ENCODE measurements at regions of chr19 and their contacts with region 1.

Region 1: GRCh38 chr19:46487802-46488445 is 7.7 kb downstream of the PNMA8B start:
- DNase-seq: peak; percentile 70 to 83
- H3K4me3 ChIP-seq: peak overlapping the region; percentile 9 to 63 (median 48)
- H3K27ac ChIP-seq: peak overlapping the region; percentile 17 to 22
- H3K4me1 ChIP-seq: peaks cover 4 to 7% of the 10 kb centered on the region in 2 donors
- H3K27me3 ChIP-seq: peaks cover 0 to 3% of the 10 kb centered on the region in 2 donors
- CTCF ChIP-seq: peak; percentile 96 to 99 (median 98)
- POLR2A ChIP-seq: no peak

Region 2: GRCh38 chr19:46271481-46272197 is 216.3 kb before region 1 on chr19:
- intact Hi-C with region 1: no loop called
- DNase-seq: no peak
- H3K4me3 ChIP-seq: no peak overlapping the region
- H3K27ac ChIP-seq: no peak overlapping the region
- H3K4me1 ChIP-seq: no peaks in the 10 kb centered on the region
- H3K27me3 ChIP-seq: peaks cover 0 to 2% of the 10 kb centered on the region in 2 donors
- CTCF ChIP-seq: no peak
- POLR2A ChIP-seq: no peak

Region 3: DNA sequence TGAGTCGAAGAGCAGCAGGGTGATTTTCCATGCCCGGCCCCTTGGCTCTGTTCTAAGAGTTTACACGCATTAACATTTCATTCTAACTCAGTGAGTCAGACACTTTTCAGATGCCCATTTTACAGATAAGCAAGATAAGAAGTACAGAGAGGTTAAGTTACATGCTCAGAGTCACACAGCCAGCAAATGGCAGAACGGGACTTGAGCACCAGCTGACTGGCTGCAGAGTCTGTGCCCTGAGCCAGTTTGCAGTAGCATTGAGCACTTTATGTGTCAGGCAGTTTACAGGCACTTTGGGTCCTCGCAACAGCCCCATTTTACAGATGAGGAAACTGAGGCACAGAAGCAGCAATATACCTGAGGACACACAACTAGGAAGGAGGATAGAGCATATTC is 93.5 kb before region 1 on chr19:
- intact Hi-C with region 1: loop called (anchors 2 kb)
- DNase-seq: no peak
- H3K4me3 ChIP-seq: no peak overlapping the region
- H3K27ac ChIP-seq: peak overlapping the region in 1 of 2 donors; percentile 32
- H3K4me1 ChIP-seq: peaks cover 0 to 9% of the 10 kb centered on the region in 2 donors
- H3K27me3 ChIP-seq: no peaks in the 10 kb centered on the region
- CTCF ChIP-seq: no peak
- POLR2A ChIP-seq: no peak

Region 4: DNA sequence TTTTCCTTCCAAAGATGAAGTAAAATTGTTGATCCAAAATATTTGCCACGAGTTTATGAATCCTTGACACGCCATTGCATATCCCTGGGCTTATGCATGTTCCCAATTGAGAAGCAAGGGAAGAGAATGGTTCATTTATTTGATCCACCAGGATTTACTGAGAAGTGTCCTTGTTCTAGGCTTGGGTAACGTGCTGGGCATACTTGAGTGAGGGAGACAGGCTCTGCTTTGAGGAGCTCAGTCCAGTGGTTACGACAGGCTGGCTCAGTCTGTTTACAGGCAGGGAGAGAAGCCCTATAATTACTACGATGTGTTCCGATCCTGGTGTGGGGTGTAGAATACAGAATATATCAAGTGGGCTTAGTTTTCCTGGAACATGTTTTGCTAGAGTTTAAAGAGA is 52.9 kb before region 1 on chr19:
- intact Hi-C with region 1: no loop called
- DNase-seq: no peak
- H3K4me3 ChIP-seq: no peak overlapping the region
- H3K27ac ChIP-seq: no peak overlapping the region
- H3K4me1 ChIP-seq: no peaks in the 10 kb centered on the region
- H3K27me3 ChIP-seq: no peaks in the 10 kb centered on the region
- CTCF ChIP-seq: no peak
- POLR2A ChIP-seq: no peak

Region 5: DNA sequence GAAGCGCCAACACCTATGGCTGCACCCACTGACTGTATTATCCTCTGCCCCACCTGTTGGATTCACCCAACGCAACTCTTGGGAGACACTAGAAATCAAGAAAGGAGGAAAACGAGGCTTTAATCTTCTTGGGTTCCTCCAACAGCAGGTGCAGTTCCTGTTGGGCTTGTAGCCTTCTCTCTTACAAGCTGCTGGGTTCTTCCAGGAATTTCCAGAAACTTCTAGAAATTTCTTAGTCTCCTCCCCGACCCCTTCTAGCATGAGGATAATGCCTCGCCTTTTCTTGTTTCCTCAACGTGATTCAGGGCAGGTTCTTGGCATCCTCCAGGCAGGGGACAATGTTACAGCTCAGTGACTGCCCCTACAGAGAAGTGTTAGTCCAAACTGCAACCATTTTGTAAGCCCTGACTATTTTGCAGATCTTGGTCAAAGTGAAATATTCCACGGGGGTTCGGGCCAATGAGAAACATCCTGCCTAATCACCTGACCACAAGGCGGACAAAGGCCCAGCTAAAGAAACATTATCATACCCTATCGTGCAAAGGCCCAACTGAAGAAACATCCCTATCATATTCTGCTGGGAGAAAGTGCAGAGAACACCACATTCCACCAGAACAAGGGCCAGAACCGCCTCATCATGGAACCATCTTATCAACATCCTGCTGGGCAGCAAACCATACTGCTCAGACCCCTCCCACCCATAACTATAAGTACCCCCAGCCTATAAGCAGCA is 15.9 kb before region 1 on chr19:
- intact Hi-C with region 1: no loop called
- DNase-seq: no peak
- H3K4me3 ChIP-seq: peak overlapping the region; percentile 31 to 70 (median 52)
- H3K27ac ChIP-seq: peak overlapping the region; percentile 84
- H3K4me1 ChIP-seq: no peaks in the 10 kb centered on the region
- H3K27me3 ChIP-seq: no peaks in the 10 kb centered on the region
- CTCF ChIP-seq: no peak
- POLR2A ChIP-seq: no peak

Region 6: DNA sequence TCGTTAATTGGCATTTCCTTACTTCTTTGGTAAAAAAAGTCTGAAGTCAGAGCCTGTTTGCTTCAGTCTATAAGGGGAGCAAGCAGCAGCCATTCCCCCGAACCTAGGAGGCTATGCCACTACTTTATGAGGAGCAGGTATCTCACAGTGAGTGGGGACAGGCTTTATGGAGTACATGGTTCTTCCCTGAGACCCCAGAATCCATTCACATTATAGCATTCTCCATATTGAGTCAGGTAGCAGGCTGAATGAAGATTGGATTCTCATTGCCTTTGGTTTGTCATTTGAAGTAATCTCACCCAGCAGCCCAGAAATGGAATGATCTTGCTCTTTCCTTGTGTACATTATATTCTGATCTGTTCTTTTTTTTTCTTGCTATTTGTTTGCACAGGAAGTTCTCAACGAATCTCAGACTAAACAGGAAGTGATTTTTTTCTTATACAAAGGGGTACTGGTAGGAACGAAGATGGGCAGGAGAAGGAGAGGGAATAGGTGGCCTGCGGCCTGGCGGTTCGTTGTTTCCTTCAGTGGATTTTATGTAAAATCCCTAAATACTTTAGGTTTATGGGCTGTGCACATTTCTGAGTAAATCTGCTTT is 447.2 kb after region 1 on chr19:
- intact Hi-C with region 1: loop called (anchors 5 kb)
- DNase-seq: no peak
- H3K4me3 ChIP-seq: no peak overlapping the region
- H3K27ac ChIP-seq: no peak overlapping the region
- H3K4me1 ChIP-seq: no peaks in the 10 kb centered on the region
- H3K27me3 ChIP-seq: no peaks in the 10 kb centered on the region
- CTCF ChIP-seq: no peak
- POLR2A ChIP-seq: no peak

Measured in breast epithelium (tissue), 4 donors.